HCT116 (cell line): ENCODE measurements at regions of chr11 and their contacts with region 1.

Region 1: DNA sequence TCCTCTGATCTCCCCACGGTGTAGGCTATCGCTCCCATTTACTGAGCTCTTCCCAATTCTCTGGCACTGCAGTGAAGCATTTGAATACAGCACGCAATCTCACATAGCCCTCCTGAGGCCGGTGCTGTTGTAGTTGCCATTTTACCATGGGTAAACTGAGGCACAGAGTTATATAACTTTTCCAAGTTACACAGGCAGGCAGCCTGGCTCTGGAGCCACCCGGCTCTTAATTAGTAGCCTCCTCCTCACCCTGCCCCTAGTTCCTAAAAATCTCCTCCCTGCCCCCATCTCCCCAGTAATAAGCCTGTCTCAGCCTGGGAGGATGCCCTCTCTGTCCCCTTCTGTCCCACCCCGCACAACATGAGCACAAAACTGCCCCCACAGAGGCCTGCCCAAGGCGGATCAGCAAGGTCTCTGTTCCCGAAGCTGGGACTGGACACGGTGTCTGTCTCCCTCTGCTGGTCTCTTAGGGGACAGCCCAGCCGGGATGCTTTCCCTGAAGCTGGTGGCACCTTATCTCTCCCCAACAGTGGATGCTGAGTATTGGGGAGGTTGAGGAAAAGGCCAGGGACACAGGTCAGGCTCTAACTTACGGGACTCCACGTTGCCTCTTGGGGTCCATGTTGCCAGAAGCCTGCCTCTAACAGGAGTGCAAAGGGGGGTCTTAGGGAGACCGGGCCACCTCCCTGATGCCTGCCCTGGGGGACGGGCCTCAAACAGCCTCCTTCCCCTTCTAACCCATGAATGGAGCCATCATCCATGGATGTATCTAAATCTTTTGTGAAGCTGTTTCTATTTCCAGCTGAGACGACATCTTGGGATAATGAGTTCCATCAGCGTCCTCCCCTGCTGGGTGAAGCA is 9.1 kb upstream of the CLCF1 start:
- DNase-seq: peak; percentile 69
- ATAC-seq: peak; percentile 74
- H3K4me3 ChIP-seq: no peak overlapping the region
- H3K27ac ChIP-seq: no peak overlapping the region
- H3K4me1 ChIP-seq: peaks cover 54 to 64% of the 10 kb centered on the region in 2 experiments
- H3K27me3 ChIP-seq: no peaks in the 10 kb centered on the region
- CTCF ChIP-seq: peak in 2 of 3 experiments; percentile 98; a peak in 4 of 6 replicates
- POLR2A ChIP-seq: no peak
- RAD21 ChIP-seq: no peak

Region 2: GRCh38 chr11:67265633-67266423 is 116.7 kb before region 1 on chr11:
- CTCF ChIA-PET with region 1: interaction called, 14 read pairs
- POLR2A ChIA-PET with region 1: no interaction called
- RAD21 ChIA-PET with region 1: interaction called in 1 of 2 experiments, 11 read pairs
- intact Hi-C with region 1: loop called (anchors 2 kb)
- DNase-seq: no peak
- ATAC-seq: peak; percentile 76
- H3K4me3 ChIP-seq: peak overlapping the region; percentile 22 to 47
- H3K27ac ChIP-seq: peak overlapping the region; percentile 84; the same call in 1 of the 2 replicates
- H3K4me1 ChIP-seq: peaks cover 14 to 43% of the 10 kb centered on the region in 2 experiments; a peak in 3 of 4 replicates
- H3K27me3 ChIP-seq: no peaks in the 10 kb centered on the region
- CTCF ChIP-seq: peak in 2 of 3 experiments; percentile 59 to 68; a peak in 4 of 6 replicates
- POLR2A ChIP-seq: no peak
- RAD21 ChIP-seq: no peak; the same call in 1 of the 2 replicates

Region 3: DNA sequence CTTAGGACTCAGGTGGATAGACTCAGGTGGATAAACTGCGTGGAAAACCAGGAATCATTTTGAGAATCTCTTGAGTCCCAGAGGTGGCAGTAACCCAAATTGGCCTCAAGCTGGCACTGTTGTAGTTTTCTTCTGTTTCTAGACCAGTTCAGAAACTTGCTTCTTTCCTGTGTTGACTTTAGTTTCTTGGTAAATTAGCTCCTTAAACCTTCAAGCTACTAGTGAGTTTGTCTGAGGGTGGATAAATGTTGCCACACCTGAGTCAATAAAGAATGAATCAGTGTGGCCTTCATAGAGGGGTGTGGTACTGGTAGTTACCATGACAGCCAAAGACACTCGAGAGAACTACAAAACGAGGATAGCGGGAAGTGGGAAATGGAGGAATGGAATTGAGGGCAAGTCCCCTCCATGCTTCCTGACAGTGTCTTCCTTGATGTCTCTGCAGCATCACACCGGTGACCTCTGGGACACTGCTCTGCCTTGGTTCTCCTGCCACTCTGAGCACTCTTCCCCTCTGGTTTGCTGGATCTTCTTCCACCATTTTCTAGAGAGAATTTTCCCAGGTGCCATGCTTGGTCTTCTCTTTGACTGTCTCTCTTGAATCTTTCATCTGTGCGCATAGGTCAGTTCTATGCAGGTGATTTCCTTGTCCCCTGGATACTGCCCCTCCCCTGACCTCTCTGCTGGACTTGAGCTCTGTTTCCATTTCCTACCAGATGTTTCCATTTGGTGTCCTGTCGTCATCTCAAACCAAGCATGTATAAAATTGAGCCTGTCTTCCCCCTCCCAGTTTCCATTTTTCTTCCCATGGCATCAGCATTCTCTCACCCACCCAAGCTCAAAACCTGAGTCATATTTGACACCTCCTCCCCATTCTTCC is 36.3 kb before region 1 on chr11:
- CTCF ChIA-PET with region 1: interaction called, 456 read pairs
- POLR2A ChIA-PET with region 1: interaction called, 210 read pairs
- RAD21 ChIA-PET with region 1: interaction called, 8 to 20 read pairs
- intact Hi-C with region 1: loop called (anchors 1 kb)
- DNase-seq: peak; percentile 54
- ATAC-seq: peak; percentile 79
- H3K4me3 ChIP-seq: peak overlapping the region in 1 of 2 experiments; percentile 13; a peak in 1 of 4 replicates
- H3K27ac ChIP-seq: peak overlapping the region; percentile 8; the same call in 1 of the 2 replicates
- H3K4me1 ChIP-seq: peaks cover 11 to 48% of the 10 kb centered on the region in 2 experiments
- H3K27me3 ChIP-seq: no peaks in the 10 kb centered on the region
- CTCF ChIP-seq: peak in 2 of 3 experiments; percentile 88 to 89; a peak in 4 of 6 replicates
- POLR2A ChIP-seq: no peak
- RAD21 ChIP-seq: no peak